ENCODE measurements at regions of chr4 and their contacts with region 1.

Region 1: DNA sequence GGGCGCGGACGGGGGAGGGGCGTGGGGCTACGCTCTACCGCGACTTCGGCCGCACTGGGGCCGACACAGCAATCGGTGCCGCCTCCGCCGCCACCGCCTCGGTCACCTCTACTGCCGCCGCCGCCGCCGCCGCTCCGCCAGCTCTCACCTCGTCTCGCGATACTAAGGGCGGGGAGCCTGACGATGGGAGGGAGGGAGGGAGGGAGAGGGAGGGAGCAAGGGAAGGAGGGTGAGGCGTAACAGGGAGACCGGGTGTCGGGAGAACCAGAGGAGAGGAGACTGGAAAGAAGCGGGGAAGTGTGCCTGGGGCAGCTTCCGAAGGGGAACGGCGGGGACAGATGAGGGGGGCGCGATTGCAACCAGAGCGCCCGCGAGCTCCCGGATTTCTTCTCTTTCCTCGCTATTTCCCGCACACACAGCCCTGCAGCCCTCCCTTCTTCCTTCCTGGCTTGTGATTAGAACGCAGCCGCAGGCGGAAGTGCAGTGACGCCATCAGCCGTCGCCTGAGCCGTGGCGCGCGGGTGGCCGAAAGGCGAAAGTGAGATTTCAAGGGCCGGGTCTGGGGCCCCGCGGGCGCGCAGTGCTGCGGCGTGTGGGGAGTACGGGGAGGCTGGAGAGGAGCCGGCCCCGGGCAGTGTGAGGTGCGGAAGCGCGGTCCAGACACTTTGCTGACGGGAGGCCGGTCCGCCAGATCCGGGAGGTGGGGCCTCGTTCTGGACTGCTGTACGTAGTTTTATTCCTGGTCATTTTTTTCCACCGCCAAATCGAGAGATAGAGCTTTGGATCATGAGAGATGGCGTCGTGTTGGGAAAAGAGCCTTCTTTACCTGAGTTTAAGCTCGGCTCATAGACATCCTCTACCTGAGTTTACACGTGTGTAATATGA is at the start of gene ANKRD17:
- DNase-seq: peak; percentile 94
- H3K4me3 Mint-ChIP-seq: peak within 1 kb of the TSS; percentile 100
- H3K27ac Mint-ChIP-seq: peak within 1 kb of the TSS; percentile 100
- H3K4me1 Mint-ChIP-seq: peaks cover 56% of the 10 kb centered on the region
- H3K27me3 Mint-ChIP-seq: peaks cover 4% of the 10 kb centered on the region

Region 2: DNA sequence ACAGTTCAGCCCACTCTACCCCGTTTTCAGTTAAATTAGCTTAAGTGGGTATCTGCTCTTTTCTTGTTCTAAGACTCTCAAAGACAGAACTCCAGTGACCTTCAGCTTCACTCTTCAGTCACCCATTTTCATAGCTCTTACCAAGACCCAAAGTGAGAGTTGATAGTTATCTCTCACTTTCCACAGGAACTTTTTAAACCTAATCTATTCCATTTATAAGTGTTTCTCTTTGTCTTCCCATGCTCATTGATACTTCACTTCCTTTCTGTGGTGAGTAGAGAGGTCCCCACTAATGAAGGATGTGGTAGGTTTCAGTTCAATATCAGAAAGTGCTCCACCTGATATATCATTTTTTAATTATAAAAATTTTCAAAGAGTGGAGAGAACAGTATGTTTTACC is 222.8 kb before region 1 on chr4:
- CTCF ChIA-PET with region 1: interaction called, 15 read pairs
- DNase-seq: no peak
- H3K4me3 Mint-ChIP-seq: no peak overlapping the region
- H3K27ac Mint-ChIP-seq: no peak overlapping the region
- H3K4me1 Mint-ChIP-seq: peaks cover 12% of the 10 kb centered on the region
- H3K27me3 Mint-ChIP-seq: no peaks in the 10 kb centered on the region

Region 3: GRCh38 chr4:73127839-73128453 is 131.0 kb before region 1 on chr4:
- CTCF ChIA-PET with region 1: interaction called, 13 read pairs
- DNase-seq: peak; percentile 27
- H3K4me3 Mint-ChIP-seq: no peak overlapping the region
- H3K27ac Mint-ChIP-seq: no peak overlapping the region
- H3K4me1 Mint-ChIP-seq: no peaks in the 10 kb centered on the region
- H3K27me3 Mint-ChIP-seq: no peaks in the 10 kb centered on the region

Measured in activated naive CD4-positive, alpha-beta T cell treated with anti-CD3 and anti-CD28 coated beads, Interleukin-2, amount 10 ng/mL, durations not matched to agents 7 days and 5 days (primary cell).